ENCODE measurements at regions of chr6 and their contacts with region 1.

Region 1: GRCh38 chr6:13487122-13488014 is at the start of gene GFOD1:
- DNase-seq: peak; percentile 77 to 84
- ATAC-seq: peak; percentile 75 to 89 (median 83)
- H3K4me3 ChIP-seq: peak within 1 kb of the TSS; percentile 85
- H3K4me3 Mint-ChIP-seq: peak within 1 kb of the TSS; percentile 90
- H3K27ac ChIP-seq: peak within 1 kb of the TSS; percentile 52
- H3K27ac Mint-ChIP-seq: peak within 1 kb of the TSS; percentile 78 to 90
- H3K4me1 ChIP-seq: peaks cover 39% of the 10 kb centered on the region
- H3K4me1 Mint-ChIP-seq: peaks cover 34 to 53% of the 10 kb centered on the region in 2 donors
- H3K27me3 ChIP-seq: no peaks in the 10 kb centered on the region
- H3K27me3 Mint-ChIP-seq: no peaks in the 10 kb centered on the region
- CTCF ChIP-seq: no peak
- total RNA-seq, gene GFOD1: 59.7 to 74.5 (median 71.2) TPM

Region 2: DNA sequence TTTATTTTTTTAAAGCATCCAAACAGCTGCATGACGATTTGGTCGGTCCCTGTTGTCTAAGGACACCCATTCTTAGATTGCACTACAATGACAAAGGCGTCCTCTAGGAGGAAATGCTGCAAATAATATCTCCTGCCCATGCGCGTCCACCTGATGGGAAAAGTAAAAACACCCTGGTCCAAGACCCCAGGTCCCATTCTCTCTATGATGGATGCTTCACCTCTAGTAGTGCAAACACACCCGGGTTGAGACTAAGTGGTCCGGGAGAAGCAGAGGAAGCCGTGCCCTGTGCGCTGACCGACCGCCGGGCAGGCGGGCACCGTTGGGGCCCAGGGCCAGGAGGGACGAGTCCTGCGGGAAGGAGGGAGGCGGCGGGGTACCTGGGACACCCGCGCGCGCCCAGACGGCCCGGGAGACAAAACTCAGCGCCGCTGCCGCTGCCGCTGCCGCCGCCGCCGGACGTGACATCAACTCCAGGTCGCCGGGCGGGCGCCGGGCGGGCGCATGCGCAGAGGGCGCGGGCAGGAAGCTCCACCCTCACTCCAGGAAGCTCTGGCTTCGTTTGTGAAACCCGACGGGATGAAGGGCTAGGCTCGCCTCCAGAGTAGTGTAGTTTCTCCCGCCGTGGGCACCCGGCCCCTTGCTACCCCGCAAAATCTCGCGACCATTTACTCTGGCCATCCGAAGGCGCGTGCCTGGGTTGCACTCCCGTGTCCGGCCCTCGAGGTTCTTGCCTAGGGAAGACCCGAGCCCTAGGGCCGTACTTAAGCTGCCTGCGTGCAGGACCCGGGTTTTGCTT is 159.1 kb before region 1 on chr6 and contains the start of gene TBC1D7:
- intact Hi-C with region 1: loop called (anchors 5 kb)
- DNase-seq: peak; percentile 94 to 95
- ATAC-seq: peak; percentile 89 to 95 (median 90)
- H3K4me3 ChIP-seq: peak within 1 kb of the TSS; percentile 74
- H3K4me3 Mint-ChIP-seq: peak within 1 kb of the TSS; percentile 92
- H3K27ac ChIP-seq: peak within 1 kb of the TSS; percentile 90
- H3K27ac Mint-ChIP-seq: peak within 1 kb of the TSS; percentile 93 to 95
- H3K4me1 ChIP-seq: peaks cover 8% of the 10 kb centered on the region
- H3K4me1 Mint-ChIP-seq: peaks cover 14 to 20% of the 10 kb centered on the region in 2 donors
- H3K27me3 ChIP-seq: no peaks in the 10 kb centered on the region
- H3K27me3 Mint-ChIP-seq: no peaks in the 10 kb centered on the region
- CTCF ChIP-seq: no peak
- total RNA-seq, gene TBC1D7: 20.1 to 29.7 (median 24.3) TPM

Region 3: DNA sequence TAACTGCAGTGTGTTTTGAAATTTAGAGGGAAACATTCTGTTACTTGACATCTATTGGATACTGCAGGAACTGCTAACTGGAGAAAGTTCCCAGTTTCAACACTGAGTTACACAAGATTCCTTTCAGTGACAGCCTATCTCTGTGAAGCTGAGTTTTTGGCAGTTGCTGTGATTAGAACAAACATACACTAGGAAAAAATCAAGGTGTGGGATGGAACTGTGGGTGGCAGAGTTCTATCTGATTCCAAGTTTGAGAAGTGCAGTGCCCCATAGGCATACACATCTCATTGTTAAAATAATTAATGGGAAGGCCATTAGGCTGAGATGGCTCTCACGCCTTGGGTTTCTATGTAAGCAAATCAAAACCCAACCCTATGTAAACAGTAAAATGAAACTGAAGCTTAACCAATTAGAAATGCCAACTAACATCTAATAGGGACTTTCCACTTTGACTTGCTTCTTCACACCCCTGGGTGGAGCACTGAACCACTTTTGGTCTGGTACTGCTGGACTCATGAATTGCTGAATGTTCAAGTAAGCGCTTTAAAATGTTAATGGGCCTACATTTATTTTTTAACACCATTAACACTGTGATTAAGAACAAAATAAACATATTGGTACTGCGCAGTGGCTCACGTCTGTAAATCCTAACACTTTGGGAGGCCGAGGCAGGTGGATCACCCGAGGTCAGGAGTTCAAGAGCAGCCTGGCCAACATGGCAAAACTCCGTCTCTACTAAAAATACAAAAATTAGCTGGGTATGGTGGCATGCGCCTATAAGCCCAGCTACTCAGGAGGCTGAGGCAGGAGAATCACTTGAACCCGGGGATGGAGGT is 103.8 kb before region 1 on chr6:
- intact Hi-C with region 1: loop called (anchors 2 kb)
- DNase-seq: peak; percentile 45 to 73
- ATAC-seq: peak; percentile 95 to 99 (median 98)
- H3K4me3 ChIP-seq: no peak overlapping the region
- H3K4me3 Mint-ChIP-seq: peak overlapping the region; percentile 79
- H3K27ac ChIP-seq: peak overlapping the region; percentile 90
- H3K27ac Mint-ChIP-seq: peak overlapping the region; percentile 73 to 96
- H3K4me1 ChIP-seq: peaks cover 48% of the 10 kb centered on the region
- H3K4me1 Mint-ChIP-seq: peaks cover 91 to 98% of the 10 kb centered on the region in 2 donors
- H3K27me3 ChIP-seq: no peaks in the 10 kb centered on the region
- H3K27me3 Mint-ChIP-seq: no peaks in the 10 kb centered on the region
- CTCF ChIP-seq: no peak

Region 4: GRCh38 chr6:13454286-13455221 is 32.8 kb before region 1 on chr6:
- intact Hi-C with region 1: loop called (anchors 2 kb)
- DNase-seq: peak; percentile 81 to 86
- ATAC-seq: peak; percentile 71 to 90 (median 85)
- H3K4me3 ChIP-seq: no peak overlapping the region
- H3K4me3 Mint-ChIP-seq: peak overlapping the region; percentile 89
- H3K27ac ChIP-seq: peak overlapping the region; percentile 91
- H3K27ac Mint-ChIP-seq: peak overlapping the region; percentile 95 to 99
- H3K4me1 ChIP-seq: peaks cover 53% of the 10 kb centered on the region
- H3K4me1 Mint-ChIP-seq: peaks cover 85 to 87% of the 10 kb centered on the region in 2 donors
- H3K27me3 ChIP-seq: no peaks in the 10 kb centered on the region
- H3K27me3 Mint-ChIP-seq: no peaks in the 10 kb centered on the region
- CTCF ChIP-seq: no peak

Region 5: GRCh38 chr6:13466304-13467215 is 20.8 kb before region 1 on chr6:
- intact Hi-C with region 1: loop called (anchors 2 kb)
- DNase-seq: no peak
- ATAC-seq: peak; percentile 58 to 76 (median 60)
- H3K4me3 ChIP-seq: no peak overlapping the region
- H3K4me3 Mint-ChIP-seq: peak overlapping the region; percentile 13
- H3K27ac ChIP-seq: peak overlapping the region; percentile 43
- H3K27ac Mint-ChIP-seq: peak overlapping the region; percentile 24 to 88
- H3K4me1 ChIP-seq: peaks cover 58% of the 10 kb centered on the region
- H3K4me1 Mint-ChIP-seq: peaks cover 85 to 87% of the 10 kb centered on the region in 2 donors
- H3K27me3 ChIP-seq: no peaks in the 10 kb centered on the region
- H3K27me3 Mint-ChIP-seq: no peaks in the 10 kb centered on the region
- CTCF ChIP-seq: no peak

Region 6: GRCh38 chr6:13526727-13527670 is 39.6 kb after region 1 on chr6:
- intact Hi-C with region 1: loop called (anchors 5 kb)
- DNase-seq: peak; percentile 27 to 62
- ATAC-seq: peak; percentile 86 to 91 (median 86)
- H3K4me3 ChIP-seq: no peak overlapping the region
- H3K4me3 Mint-ChIP-seq: peak overlapping the region; percentile 87
- H3K27ac ChIP-seq: peak overlapping the region; percentile 75
- H3K27ac Mint-ChIP-seq: peak overlapping the region; percentile 75 to 83
- H3K4me1 ChIP-seq: peaks cover 19% of the 10 kb centered on the region
- H3K4me1 Mint-ChIP-seq: peaks cover 17 to 24% of the 10 kb centered on the region in 2 donors
- H3K27me3 ChIP-seq: no peaks in the 10 kb centered on the region
- H3K27me3 Mint-ChIP-seq: no peaks in the 10 kb centered on the region
- CTCF ChIP-seq: no peak

Measured in natural killer cell (primary cell).